Mammary epithelial cell (primary cell): ENCODE measurements at regions of chr2 and their contacts with region 1.

Region 1: DNA sequence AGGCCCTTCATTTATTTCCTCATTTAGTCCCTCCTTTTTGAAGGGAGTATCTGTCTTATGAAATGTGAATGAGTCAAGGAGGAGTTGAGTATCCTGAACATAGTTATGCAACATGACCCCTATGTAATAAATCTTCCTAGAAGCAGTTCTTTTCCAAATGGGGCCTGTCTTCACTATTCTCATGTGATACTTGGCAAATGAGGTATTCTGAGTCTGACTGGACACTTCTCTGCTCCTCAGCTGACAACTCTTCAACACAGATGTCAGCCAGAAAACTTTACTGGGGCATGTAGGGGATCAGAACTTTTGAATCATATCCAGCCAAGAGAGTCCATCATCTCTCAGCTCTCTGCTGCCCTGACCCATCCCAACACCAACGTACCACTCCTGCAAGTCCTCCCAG is 291.6 kb downstream of the ZNF385B start:
- DNase-seq: peak; percentile 82
- H3K4me3 ChIP-seq: no peak overlapping the region
- H3K27ac ChIP-seq: no peak overlapping the region
- H3K4me1 ChIP-seq: no peaks in the 10 kb centered on the region
- H3K27me3 ChIP-seq: no peaks in the 10 kb centered on the region
- CTCF ChIP-seq: no peak

Region 2: DNA sequence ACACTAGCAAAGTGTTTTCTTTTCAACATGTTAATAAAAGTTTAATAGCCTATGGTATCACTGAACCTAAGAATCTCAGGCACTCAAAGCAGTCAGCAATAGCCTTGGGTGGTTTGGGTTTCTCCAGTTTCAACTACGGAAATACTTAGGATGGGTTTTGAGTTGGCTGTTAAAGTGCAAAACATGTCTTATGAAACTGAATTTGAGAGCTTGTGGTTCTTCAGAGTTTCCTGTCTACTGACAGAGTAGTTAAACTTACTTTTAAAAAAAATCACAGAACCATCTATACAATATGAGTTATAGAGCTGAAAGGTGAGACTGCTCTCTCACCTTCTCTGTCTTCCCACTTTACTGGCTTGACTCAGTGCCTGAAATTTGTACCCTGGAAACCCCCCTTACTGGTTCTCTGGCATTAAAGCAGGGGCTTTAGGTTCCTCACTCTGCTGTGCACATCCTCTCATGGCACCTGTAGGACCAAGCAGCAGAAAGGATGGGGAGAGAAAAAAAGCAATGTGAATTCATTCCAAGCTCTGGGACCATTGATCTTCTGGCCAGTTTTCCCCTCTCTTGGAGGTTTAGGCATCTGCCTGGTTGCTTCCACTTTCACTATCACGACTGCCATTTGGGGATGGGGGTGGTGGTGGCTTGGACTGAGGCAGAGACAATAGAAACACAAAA is 538.0 kb before region 1 on chr2:
- CTCF ChIA-PET with region 1: no interaction called
- dilution Hi-C with region 1: no loop called
- in situ Hi-C with region 1: no loop called
- intact Hi-C with region 1: no loop called
- DNase-seq: peak; percentile 31
- H3K4me3 ChIP-seq: no peak overlapping the region
- H3K27ac ChIP-seq: no peak overlapping the region
- H3K4me1 ChIP-seq: no peaks in the 10 kb centered on the region
- H3K27me3 ChIP-seq: no peaks in the 10 kb centered on the region
- CTCF ChIP-seq: no peak

Region 3: GRCh38 chr2:179636995-179637394 is 67.2 kb after region 1 on chr2:
- CTCF ChIA-PET with region 1: no interaction called
- dilution Hi-C with region 1: loop called (anchors 5 kb)
- in situ Hi-C with region 1: no loop called
- intact Hi-C with region 1: no loop called
- DNase-seq: no peak
- H3K4me3 ChIP-seq: no peak overlapping the region
- H3K27ac ChIP-seq: no peak overlapping the region
- H3K4me1 ChIP-seq: no peaks in the 10 kb centered on the region
- H3K27me3 ChIP-seq: peaks cover 2% of the 10 kb centered on the region
- CTCF ChIP-seq: no peak